Activated naive CD8-positive, alpha-beta T cell treated with anti-CD3 and anti-CD28 coated beads, Interleukin-2, amount 10 ng/mL, durations not matched to agents 7 days and 5 days (primary cell): ENCODE measurements at regions of chr3 and their contacts with region 1.

Region 1: DNA sequence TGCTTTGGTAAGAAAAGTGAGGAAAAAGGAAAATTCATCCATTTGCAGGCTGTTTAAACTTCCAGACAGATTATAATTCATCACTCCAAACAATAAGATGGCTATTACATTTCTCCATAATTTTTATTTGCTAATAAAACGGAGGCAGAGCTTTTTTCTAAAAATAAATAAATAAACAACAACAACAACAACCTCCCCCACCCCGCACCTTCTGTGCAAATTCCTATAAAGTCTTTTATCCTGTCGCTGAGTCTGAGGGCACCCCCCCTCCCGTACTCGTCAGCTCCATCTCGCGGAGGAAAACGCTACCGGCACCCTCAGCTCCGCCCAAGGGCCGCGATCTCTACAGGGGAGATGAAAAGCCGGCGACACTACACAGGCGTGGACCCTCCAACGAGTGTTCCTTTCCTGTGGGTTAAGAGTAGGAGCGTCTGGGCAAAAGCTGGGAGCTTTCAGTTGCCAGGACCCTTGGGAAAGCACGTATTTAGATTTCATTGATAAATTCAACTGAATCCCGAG is 1.0 kb upstream of the ATP1B3 start:
- DNase-seq: peak; percentile 83
- ATAC-seq: peak; percentile 52
- H3K4me3 Mint-ChIP-seq: peak overlapping the region; percentile 93
- H3K27ac Mint-ChIP-seq: peak overlapping the region; percentile 94
- H3K4me1 Mint-ChIP-seq: peaks cover 28% of the 10 kb centered on the region
- H3K27me3 Mint-ChIP-seq: peaks cover under 1% of the 10 kb centered on the region

Region 2: DNA sequence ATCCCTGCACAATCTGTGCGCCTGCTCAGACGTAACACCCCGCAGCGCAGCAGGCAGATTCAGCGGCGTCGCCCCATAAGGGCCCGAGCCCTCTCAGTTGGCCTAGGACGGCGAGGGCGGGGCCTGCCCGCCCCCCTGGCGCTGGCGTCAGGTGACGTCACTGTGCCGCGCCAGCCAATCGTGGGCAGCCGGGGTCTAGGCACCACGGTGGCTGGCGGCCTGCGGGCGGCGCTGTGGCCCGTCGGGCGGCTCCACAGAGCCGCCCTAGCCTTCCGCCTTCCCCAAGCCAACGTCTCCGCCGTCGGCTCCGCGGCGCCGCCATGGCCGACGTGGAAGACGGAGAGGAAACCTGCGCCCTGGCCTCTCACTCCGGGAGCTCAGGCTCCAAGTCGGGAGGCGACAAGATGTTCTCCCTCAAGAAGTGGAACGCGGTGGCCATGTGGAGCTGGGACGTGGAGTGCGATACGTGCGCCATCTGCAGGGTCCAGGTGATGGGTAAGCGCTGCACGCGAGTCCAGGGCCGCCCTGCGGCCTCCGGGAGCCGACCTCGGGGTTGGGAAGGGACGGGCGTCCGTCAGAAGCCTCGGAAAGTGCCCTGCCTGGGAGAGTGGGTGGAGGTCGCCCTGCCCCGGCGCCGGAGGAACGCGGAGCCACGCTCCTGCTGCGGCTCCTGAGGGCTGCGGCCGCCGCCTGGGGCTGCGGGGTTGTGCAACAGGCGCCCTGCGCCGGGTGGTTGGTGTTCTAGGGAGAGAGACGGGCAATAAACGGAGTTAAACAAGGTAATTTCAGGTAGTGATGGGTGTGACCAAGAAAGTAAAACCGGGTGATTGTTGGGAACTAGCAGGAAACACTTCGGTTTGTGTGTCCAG is 137.2 kb before region 1 on chr3 and contains the start of gene RNF7:
- POLR2A ChIA-PET with region 1: interaction called, 42 read pairs
- DNase-seq: peak; percentile 99
- ATAC-seq: peak; percentile 95
- H3K4me3 Mint-ChIP-seq: peak within 1 kb of the TSS; percentile 99
- H3K27ac Mint-ChIP-seq: peak within 1 kb of the TSS; percentile 99
- H3K4me1 Mint-ChIP-seq: peaks cover 28% of the 10 kb centered on the region
- H3K27me3 Mint-ChIP-seq: peaks cover 2% of the 10 kb centered on the region
- total RNA-seq, gene RNF7: 52.5 to 53.9 TPM

Region 3: DNA sequence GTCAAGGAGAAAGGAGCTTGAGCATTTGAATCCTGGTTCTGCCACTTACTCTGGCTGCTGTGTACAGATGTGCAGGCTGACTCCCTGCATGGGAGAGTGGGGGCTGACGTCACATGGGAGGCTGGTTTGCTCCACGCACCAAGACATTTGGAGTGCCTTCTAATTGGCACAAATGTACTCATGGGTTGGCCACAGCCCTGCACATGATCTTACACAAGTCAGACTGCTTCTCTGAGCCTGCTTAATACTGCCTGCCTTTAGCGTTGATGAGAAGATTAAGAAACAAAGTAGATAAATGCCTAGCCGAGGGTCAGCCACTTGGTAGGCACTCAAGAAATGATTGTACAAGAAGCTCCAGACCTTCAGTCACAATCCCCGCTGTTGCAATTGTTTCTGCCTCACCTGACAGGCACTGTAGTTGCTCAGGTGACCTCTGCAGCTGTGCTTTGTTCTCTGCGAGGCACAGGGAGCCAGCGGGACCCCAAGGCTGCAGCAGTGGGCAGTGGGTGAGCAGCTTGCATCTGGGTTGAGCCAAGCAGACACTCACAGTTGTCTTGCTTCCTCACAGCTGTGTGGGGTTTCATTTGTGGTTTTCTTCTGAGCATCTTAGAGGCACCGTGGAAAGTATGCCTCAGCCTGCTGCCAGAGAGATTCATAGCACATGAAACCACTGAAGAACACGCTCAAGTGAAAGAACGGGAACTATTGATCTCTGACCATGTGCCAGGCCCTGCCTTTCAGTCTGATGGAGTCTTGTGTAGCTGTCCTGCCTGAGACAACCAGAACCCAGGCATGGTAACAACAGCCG is 79.1 kb before region 1 on chr3:
- POLR2A ChIA-PET with region 1: interaction called, 19 read pairs
- DNase-seq: peak; percentile 63
- ATAC-seq: peak; percentile 79
- H3K4me3 Mint-ChIP-seq: peak overlapping the region; percentile 90
- H3K27ac Mint-ChIP-seq: peak overlapping the region; percentile 98
- H3K4me1 Mint-ChIP-seq: peaks cover 41% of the 10 kb centered on the region
- H3K27me3 Mint-ChIP-seq: peaks cover 2% of the 10 kb centered on the region

Region 4: DNA sequence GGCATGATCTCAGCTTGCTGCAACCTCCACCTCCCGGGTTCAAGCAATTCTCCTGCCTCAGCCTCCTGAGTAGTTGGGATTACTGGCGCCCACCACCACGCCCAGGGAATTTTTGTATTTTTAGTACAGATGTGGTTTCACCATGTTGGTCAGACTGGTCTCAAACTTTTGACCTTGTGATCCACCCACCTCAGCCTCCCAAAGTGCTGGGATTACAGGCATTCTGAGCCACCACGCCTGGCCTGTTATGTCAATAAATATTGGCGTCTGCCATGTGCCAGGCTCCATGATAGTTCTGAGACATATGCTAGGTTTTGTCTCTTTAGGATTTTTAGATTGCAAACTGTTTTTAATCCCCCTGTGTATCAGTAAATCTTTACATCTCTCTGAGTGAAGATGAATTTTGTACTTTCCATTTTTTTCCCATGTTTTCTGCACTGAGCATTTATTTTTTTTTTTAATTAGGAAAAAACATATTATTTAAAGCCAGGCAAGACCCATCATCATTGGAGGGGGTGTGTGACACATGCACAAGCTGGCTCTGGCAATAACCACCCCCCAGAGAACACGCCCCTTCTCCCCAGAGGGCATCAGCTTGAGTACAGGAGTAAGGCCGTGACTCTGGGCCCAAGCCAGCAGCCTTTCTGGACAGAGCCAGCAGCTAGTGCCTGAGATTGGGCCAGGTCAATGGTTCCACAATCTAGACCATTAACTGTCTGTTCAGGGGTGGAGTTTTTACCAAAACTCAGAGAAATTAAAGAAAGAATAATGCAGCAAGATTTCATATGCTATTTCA is 50.0 kb before region 1 on chr3:
- POLR2A ChIA-PET with region 1: no interaction called
- DNase-seq: no peak
- ATAC-seq: no peak
- H3K4me3 Mint-ChIP-seq: no peak overlapping the region
- H3K27ac Mint-ChIP-seq: no peak overlapping the region
- H3K4me1 Mint-ChIP-seq: no peaks in the 10 kb centered on the region
- H3K27me3 Mint-ChIP-seq: no peaks in the 10 kb centered on the region

Region 5: GRCh38 chr3:141887051-141887450 is 11.6 kb after region 1 on chr3:
- POLR2A ChIA-PET with region 1: interaction called, 10 read pairs
- DNase-seq: no peak
- ATAC-seq: no peak
- H3K4me3 Mint-ChIP-seq: no peak overlapping the region
- H3K27ac Mint-ChIP-seq: no peak overlapping the region
- H3K4me1 Mint-ChIP-seq: peaks cover 13% of the 10 kb centered on the region
- H3K27me3 Mint-ChIP-seq: no peaks in the 10 kb centered on the region